ENCODE measurements at regions of chr11 and their contacts with region 1.

Region 1: GRCh38 chr11:60305906-60306619 is 21.0 kb upstream of the MS4A6E start:
- DNase-seq: no peak
- ATAC-seq: no peak
- H3K4me3 Mint-ChIP-seq: no peak overlapping the region
- H3K27ac Mint-ChIP-seq: no peak overlapping the region
- H3K4me1 Mint-ChIP-seq: peaks cover 32% of the 10 kb centered on the region
- H3K27me3 Mint-ChIP-seq: peaks cover 23% of the 10 kb centered on the region

Region 2: GRCh38 chr11:60145677-60146076 is 160.4 kb before region 1 on chr11:
- CTCF ChIA-PET with region 1: no interaction called
- POLR2A ChIA-PET with region 1: no interaction called
- intact Hi-C with region 1: loop called in 1 of 2 experiments (anchors 5 kb)
- DNase-seq: no peak
- ATAC-seq: peak; percentile 52
- H3K4me3 Mint-ChIP-seq: no peak overlapping the region
- H3K27ac Mint-ChIP-seq: no peak overlapping the region
- H3K4me1 Mint-ChIP-seq: peaks cover 23% of the 10 kb centered on the region
- H3K27me3 Mint-ChIP-seq: peaks cover 4% of the 10 kb centered on the region

Region 3: GRCh38 chr11:60204922-60205321 is 101.1 kb before region 1 on chr11:
- CTCF ChIA-PET with region 1: no interaction called
- POLR2A ChIA-PET with region 1: no interaction called
- intact Hi-C with region 1: loop called (anchors 1 to 10 kb)
- DNase-seq: no peak
- ATAC-seq: peak; percentile 48
- H3K4me3 Mint-ChIP-seq: no peak overlapping the region
- H3K27ac Mint-ChIP-seq: no peak overlapping the region
- H3K4me1 Mint-ChIP-seq: peaks cover 16% of the 10 kb centered on the region
- H3K27me3 Mint-ChIP-seq: peaks cover 12% of the 10 kb centered on the region